ENCODE measurements at regions of chr15 and their contacts with region 1.

Region 1: GRCh38 chr15:57340682-57341259 is 35.5 kb upstream of the CGNL1 start:
- DNase-seq: peak; percentile 52
- H3K4me3 Mint-ChIP-seq: no peak overlapping the region
- H3K27ac Mint-ChIP-seq: no peak overlapping the region
- H3K4me1 Mint-ChIP-seq: no peaks in the 10 kb centered on the region
- H3K27me3 Mint-ChIP-seq: peaks cover 2% of the 10 kb centered on the region

Region 2: DNA sequence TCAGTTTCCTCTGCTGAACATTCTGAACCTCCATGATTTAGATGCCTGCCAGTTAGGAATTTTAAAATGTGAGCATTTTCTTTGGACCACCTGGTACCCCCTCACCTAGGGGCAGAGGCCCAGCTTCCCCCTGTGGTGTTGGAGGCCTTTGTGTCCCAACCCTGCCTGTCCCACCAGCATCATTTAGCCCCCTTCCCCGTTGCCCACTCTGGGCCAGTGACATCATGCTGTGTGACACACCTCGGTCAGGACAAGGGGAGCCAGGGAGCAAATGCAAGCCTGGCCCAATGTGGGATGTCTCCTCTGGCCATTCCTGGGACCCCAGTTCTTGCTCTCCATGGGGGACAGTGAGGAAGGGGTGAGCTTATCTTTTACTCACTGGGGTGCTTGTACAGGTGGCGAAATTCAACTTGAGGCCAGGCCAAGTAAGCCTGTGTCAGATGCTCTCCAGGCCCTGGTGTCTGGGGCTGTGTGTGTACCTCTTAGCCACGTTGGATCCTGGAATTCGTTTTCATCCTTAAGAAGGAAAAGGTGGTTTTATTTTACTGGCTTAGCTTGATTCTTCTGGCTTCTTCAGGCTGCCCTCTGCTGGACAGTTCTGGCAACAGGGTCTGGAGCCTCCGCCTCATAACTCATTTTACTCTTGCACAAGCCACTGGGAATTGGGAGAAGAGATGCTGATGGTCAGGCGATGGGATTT is 201.2 kb after region 1 on chr15:
- CTCF ChIA-PET with region 1: interaction called, 15 read pairs
- intact Hi-C with region 1: loop called (anchors 1 kb)
- DNase-seq: peak; percentile 61
- H3K4me3 Mint-ChIP-seq: no peak overlapping the region
- H3K27ac Mint-ChIP-seq: no peak overlapping the region
- H3K4me1 Mint-ChIP-seq: no peaks in the 10 kb centered on the region
- H3K27me3 Mint-ChIP-seq: peaks cover 2% of the 10 kb centered on the region

Region 3: GRCh38 chr15:57866149-57866736 is 525.5 kb after region 1 on chr15:
- CTCF ChIA-PET with region 1: interaction called, 6 read pairs
- intact Hi-C with region 1: loop called (anchors 10 kb)
- DNase-seq: peak; percentile 74
- H3K4me3 Mint-ChIP-seq: no peak overlapping the region
- H3K27ac Mint-ChIP-seq: no peak overlapping the region
- H3K4me1 Mint-ChIP-seq: no peaks in the 10 kb centered on the region
- H3K27me3 Mint-ChIP-seq: peaks cover 31% of the 10 kb centered on the region

Measured in activated naive CD4-positive, alpha-beta T cell treated with anti-CD3 and anti-CD28 coated beads for 36 hours (primary cell).